Activated CD4-positive, alpha-beta memory T cell treated with anti-CD3 and anti-CD28 coated beads for 36 hours (primary cell): ENCODE measurements at regions of chr2 and their contacts with region 1.

Region 1: DNA sequence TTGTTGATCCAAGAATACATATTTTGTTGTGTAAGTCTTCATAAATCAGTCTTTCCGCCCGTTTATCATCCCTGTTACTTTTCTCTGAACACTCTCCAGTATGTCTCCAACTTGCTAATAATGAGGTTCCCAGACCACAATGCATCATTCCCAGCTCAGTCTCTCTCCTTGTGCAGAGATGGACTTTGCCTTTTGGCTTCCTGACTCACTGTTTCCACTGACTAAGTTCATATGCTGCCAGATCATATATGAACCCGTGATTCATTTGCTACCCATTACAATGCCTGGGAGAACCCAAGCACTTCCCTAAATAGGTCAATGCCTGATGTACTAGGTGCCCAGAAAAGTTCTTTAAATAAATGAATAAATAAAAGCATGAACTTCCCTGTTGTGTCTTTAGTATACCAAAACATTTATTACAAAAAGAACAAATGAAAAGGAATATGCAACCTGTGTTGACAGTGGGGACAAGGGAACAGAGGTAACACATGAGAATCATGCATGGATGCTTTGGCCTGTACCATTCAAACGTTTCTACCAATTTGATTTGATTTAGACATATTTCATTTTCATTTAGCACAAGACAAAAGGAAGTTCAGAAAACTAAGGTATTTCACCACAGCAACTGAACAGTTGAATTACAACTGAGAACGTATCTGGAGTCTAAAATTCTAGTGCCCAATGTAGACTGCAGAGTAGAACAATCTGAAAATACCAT is 215.4 kb upstream of the HNRNPA3 start:
- DNase-seq: peak; percentile 34
- H3K4me3 Mint-ChIP-seq: no peak overlapping the region
- H3K27ac Mint-ChIP-seq: peak overlapping the region; percentile 18
- H3K4me1 Mint-ChIP-seq: peaks cover 19% of the 10 kb centered on the region
- H3K27me3 Mint-ChIP-seq: no peaks in the 10 kb centered on the region

Region 2: GRCh38 chr2:176931588-176932563 is 65.4 kb before region 1 on chr2:
- CTCF ChIA-PET with region 1: no interaction called
- POLR2A ChIA-PET with region 1: no interaction called
- intact Hi-C with region 1: loop called (anchors 1 kb)
- DNase-seq: peak; percentile 27
- H3K4me3 Mint-ChIP-seq: no peak overlapping the region
- H3K27ac Mint-ChIP-seq: peak overlapping the region; percentile 20
- H3K4me1 Mint-ChIP-seq: peaks cover 13% of the 10 kb centered on the region
- H3K27me3 Mint-ChIP-seq: peaks cover 1% of the 10 kb centered on the region

Region 3: GRCh38 chr2:177148477-177149154 is 151.4 kb after region 1 on chr2:
- CTCF ChIA-PET with region 1: no interaction called
- POLR2A ChIA-PET with region 1: no interaction called
- intact Hi-C with region 1: loop called (anchors 5 kb)
- DNase-seq: peak; percentile 81
- H3K4me3 Mint-ChIP-seq: peak overlapping the region; percentile 78
- H3K27ac Mint-ChIP-seq: no peak overlapping the region
- H3K4me1 Mint-ChIP-seq: peaks cover 12% of the 10 kb centered on the region
- H3K27me3 Mint-ChIP-seq: peaks cover 20% of the 10 kb centered on the region